ENCODE measurements at regions of chr14 and their contacts with region 1.

Region 1: DNA sequence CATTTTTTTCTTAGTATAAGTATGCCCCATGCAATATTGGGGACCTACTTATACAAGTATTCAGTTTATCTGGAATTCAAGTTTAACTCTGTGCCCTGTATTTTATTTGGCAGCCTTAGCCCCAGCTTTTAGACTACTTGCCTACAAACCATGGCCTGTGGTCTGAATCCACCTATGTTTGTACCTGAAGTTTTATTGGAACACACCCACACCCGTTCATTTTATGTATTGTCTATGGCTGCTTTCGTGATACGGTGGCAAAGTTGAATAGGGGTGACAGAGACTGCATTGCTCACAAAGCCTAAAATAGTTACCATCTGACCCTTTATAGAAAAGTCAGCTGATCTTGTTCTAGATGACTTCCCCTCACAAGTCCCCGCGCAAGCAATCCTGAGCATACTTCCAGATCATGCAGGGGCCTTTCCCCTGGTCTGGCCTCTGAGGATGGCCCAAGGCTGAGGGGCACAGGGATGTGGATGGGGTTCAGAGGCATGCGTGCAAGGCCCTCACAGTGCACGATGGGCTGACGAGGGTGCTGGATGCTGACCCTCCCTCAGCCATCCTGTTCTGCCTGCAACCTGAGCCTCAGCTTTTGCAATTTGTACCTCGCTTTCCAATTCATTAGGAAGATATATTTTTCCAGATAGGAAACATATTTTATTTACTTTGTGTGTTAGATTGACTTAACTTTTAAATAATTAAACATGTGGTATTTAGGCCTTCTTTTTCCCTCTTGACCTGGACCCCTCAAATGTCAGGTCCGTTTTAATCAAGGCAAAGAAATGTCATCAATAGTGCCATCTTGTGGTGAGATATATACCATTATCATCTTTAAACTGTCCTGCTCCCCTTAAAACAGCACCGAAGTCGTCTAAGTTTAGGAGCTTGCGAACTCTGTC is 527.3 kb upstream of the CCDC196 start:
- DNase-seq: no peak
- ATAC-seq: peak; percentile 69

Region 2: DNA sequence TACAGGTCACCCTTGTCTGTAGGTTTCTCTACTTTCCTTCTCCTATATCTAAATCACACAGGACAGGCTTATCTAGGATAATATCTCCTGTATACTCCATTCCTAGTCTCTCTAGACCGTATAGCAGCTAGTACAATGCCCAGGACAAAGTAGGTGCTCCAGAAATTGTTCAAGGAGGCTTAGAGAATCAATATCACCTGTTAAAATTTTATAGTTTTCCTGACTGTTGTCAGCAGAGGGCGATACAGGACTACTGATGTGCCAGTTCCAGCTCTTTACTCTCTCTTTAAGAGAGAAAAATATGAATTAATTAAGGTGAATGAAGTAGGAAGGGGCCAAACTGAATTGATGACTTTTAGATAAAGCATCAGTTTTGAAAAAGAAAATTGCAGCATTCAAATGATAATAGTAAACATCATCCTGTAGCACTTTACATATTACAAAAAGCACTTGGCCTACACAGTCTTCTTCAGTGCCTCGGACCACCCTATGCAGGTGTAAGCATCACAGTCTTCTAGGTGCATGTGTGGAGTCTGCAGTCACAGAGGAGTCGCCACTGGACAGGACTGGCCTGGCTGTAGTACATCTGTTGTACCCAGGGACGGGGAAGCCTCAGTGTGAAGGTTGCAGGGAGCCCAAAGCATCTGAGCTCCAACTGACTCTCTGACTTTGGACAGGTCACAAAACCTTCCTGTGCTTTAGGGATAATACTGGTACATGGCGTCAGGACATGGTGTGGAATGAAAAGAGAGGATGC is 794.7 kb before region 1 on chr14:
- intact Hi-C with region 1: loop called (anchors 10 kb)
- DNase-seq: no peak
- ATAC-seq: peak; percentile 58

Region 3: GRCh38 chr14:65412032-65412846 is 546.7 kb before region 1 on chr14 and contains the start of gene FUT8:
- intact Hi-C with region 1: loop called (anchors 10 kb)
- DNase-seq: peak; percentile 98
- ATAC-seq: peak; percentile 96
- total RNA-seq, gene FUT8: 9.9 TPM

Region 4: GRCh38 chr14:66056926-66057552 is 98.1 kb after region 1 on chr14:
- intact Hi-C with region 1: no loop called
- DNase-seq: no peak
- ATAC-seq: no peak

Region 5: DNA sequence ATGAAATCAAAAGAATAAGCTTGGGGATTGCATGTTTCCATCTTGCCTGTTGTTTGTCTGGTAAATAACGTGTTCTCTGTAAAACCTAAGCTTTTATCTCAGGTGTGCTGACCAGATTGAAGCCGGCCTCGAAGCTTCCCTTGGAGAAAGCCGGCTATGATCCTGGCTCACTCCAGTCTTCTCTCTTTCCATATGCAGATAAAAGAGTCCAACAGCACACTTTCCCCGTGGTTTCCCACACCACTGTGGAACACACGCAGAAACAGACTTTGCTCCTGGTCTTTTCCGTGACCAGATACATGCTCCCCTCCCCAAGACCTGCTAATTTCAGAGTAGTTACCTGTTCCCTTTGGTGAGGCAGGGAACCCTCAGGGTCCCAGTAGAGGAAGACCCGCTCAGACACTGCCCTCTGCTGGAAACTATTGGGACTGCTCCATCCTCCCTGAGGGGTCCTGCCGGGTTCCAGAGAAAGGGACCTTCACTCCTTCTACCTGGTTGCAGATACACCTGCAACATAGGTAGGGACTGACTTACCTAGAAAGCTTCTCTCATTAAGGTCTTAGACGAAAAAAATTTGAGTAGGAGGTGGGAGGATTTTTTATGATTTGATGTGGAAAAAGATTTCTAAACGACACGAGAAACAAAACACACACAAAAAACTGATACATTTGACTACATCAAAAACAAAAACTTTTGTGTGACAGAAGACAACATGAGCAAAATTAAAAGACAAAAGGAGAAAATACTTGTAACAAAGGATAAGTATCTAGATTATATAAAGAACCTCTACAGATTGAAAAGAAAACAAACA is 111.8 kb after region 1 on chr14:
- intact Hi-C with region 1: loop called (anchors 10 kb)
- DNase-seq: no peak
- ATAC-seq: peak; percentile 66

Region 6: GRCh38 chr14:66206554-66206953 is 247.6 kb after region 1 on chr14:
- intact Hi-C with region 1: no loop called
- DNase-seq: no peak
- ATAC-seq: no peak

Measured in Right ventricle myocardium superior (tissue), 1 donor.